ENCODE measurements at regions of chr11 and their contacts with region 1.

Region 1: GRCh38 chr11:27485930-27486773 is 13.6 kb upstream of the LGR4 start:
- H3K4me3 ChIP-seq: no peak overlapping the region
- H3K27ac ChIP-seq: no peak overlapping the region
- H3K4me1 ChIP-seq: no peaks in the 10 kb centered on the region
- CTCF ChIP-seq: peak; percentile 55

Region 2: DNA sequence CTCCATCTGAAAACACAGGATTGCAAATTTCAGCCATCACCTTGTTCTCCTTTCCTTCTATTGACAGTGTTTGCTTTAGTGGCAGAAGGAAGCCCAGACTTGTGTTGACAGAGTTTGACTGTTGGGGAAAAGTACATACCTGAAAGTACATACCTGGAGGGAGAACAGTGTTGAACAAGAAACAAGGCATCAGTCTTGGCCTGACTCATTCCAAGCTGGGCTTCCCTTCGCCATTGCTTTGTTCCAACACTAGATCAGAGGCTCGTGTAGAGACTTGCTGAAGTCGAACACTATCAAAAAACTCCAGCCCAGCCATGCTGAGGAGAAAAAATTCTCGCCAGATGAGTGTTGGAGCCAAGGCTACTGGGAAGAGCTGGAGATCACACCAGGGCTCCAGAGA is 312.1 kb before region 1 on chr11:
- CTCF ChIA-PET with region 1: interaction called, 21 read pairs
- POLR2A ChIA-PET with region 1: interaction called, 4 read pairs
- H3K4me3 ChIP-seq: no peak overlapping the region
- H3K27ac ChIP-seq: no peak overlapping the region
- H3K4me1 ChIP-seq: peaks cover 16% of the 10 kb centered on the region
- CTCF ChIP-seq: no peak

Region 3: DNA sequence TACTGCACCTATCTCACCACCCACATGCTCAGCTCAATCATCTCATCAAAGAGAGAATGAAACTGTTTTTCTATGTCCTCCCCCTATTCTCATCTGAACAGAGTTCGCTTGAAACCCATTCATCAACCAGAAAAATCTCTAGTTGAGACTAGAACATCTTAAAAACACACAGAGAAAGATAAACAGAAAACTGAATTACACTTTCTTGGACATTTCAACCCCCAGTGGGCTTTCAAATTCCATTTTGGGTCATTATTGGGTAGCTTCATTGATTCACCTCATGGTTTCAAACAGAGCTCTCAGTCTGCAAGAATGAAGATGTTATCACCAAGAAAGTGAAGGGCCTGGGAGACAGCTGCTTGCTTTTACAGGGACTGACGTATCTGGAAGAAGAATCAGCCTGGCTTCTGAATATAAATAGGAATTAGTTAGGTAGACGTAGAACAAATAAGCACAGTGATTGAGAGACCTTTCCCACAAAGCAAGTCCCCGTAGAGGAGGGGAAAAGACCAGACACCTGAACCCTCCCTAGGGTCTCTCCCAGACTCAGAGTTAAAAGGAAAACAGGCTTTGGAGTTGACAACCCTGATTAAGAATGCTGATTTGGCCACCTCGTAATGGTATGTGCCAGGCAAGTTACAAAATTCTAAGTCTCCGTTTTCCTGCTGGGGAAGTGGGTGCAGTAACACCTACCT is 289.8 kb before region 1 on chr11:
- CTCF ChIA-PET with region 1: interaction called, 12 read pairs
- POLR2A ChIA-PET with region 1: no interaction called
- H3K4me3 ChIP-seq: no peak overlapping the region
- H3K27ac ChIP-seq: peak overlapping the region; percentile 53
- H3K4me1 ChIP-seq: peaks cover 19% of the 10 kb centered on the region
- CTCF ChIP-seq: no peak

Region 4: DNA sequence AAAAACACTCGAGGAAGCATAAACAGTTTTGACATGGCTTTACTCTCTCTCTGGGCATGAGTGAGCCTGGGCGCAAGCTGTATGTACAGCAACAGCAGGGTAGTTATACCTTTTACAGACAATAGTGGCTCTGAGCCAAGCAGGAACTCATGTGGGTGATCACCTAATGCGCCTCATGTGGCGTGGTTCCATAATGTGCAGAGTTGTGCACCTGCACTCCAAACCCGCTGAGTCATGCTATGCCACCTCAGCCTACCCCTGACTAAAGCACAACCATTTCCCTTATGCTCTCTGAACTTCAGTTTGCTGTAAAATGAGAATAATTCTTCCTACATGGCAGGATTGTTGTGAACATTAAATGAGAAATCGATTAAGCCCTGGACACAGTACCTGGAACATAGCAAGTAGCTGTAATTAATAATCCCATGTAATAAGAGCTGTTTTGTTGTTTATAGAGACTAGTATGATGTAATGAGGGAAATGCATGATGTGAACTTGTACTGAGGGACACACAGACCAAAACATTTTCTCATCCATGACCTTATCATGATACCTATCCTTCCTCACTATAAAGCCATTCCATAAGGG is 194.8 kb before region 1 on chr11:
- CTCF ChIA-PET with region 1: interaction called, 37 read pairs
- POLR2A ChIA-PET with region 1: no interaction called
- H3K4me3 ChIP-seq: no peak overlapping the region
- H3K27ac ChIP-seq: no peak overlapping the region
- H3K4me1 ChIP-seq: no peaks in the 10 kb centered on the region
- CTCF ChIP-seq: no peak

Region 5: DNA sequence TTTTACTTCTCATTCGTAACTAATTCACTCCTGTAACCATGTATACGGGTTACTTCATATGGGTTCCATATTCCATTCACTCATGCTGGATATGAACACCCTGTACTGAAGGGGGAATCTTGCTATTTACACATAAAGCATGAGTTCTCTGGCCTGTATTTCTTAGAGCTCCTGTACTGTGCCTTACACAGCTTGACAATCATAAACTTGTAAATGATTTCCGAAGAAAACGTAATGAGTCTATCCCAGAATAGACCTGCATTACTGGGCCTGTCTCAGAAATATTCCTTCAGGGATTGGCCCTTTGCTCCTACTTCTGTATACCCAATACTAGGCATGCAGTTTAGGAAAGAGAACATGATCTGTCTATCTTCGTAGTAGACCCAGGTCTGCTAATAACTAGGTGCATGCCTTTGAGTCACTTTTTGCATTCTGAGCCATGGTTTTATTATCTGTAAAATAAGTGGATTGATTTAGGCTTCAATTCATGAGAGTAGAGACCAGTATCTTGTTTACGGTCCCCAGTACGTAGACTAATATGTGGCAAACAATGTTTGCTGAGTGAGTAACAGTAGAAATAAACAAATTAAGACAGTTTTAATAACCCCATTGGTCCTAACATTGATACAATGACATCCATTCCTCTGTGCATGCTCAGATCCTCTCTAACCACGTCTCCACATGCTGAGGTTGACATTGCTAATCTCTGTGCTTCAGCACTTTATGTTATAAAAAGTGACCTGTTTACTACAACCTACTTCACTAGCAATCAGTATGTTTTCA is 124.3 kb before region 1 on chr11:
- CTCF ChIA-PET with region 1: interaction called, 10 read pairs
- POLR2A ChIA-PET with region 1: interaction called, 5 read pairs
- H3K4me3 ChIP-seq: peak overlapping the region; percentile 98
- H3K27ac ChIP-seq: no peak overlapping the region
- H3K4me1 ChIP-seq: no peaks in the 10 kb centered on the region
- CTCF ChIP-seq: no peak

Region 6: GRCh38 chr11:27464154-27464759 is 21.9 kb before region 1 on chr11:
- CTCF ChIA-PET with region 1: interaction called, 10 read pairs
- POLR2A ChIA-PET with region 1: no interaction called
- H3K4me3 ChIP-seq: no peak overlapping the region
- H3K27ac ChIP-seq: no peak overlapping the region
- H3K4me1 ChIP-seq: peaks cover 7% of the 10 kb centered on the region; the same call in 1 of the 2 replicates
- CTCF ChIP-seq: no peak

Region 7: GRCh38 chr11:27497284-27497866 is 11.2 kb after region 1 on chr11:
- CTCF ChIA-PET with region 1: interaction called, 92 read pairs
- POLR2A ChIA-PET with region 1: no interaction called
- H3K4me3 ChIP-seq: no peak overlapping the region
- H3K27ac ChIP-seq: no peak overlapping the region
- H3K4me1 ChIP-seq: no peaks in the 10 kb centered on the region
- CTCF ChIP-seq: no peak